Posterior cingulate gyrus (tissue), 11 donors: ENCODE measurements at regions of chr11 and their contacts with region 1.

Region 1: DNA sequence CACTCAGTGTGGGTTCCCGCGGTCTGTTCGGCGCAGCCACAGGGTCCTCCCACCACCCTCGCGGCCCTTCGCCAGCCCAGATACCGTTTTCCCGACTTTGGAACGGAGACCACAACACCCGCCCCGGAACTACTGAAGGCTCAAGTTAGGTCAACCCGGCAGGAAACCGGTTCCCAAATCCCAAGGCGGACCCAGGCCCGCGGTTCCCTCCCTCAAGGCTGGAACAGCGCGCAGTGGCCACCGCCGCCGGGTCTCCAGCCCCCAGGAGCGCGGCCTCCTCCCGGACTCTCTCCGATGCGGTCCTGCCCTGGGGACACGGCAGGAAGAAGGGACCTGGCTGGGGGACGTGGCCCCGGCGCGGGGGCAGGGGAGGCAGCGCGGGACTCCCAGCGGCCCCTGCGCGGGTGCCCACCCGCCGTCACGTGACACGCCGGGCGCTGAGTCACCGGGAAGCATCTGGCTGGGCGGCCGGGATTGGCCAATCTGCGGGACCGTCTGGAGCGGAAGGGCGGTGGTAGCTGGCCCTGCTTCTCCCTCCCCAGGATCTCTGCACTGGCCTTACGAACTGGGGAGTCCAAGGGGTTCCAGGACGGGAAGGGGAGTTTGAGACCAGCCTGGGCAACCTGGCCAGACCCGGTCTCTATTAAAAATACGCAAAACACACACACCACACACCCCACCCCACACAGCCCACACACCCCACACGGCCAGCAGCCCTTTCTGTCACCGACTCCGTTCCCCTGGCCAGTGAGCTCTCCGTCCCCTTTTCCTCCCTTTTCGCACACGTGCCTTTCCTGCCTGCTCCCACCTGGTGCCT is 21.5 kb upstream of the MALAT1 start:
- DNase-seq: peak; percentile 93 to 99 (median 96)

Region 2: GRCh38 chr11:65366340-65366773 is 111.0 kb before region 1 on chr11:
- intact Hi-C with region 1: no loop called
- DNase-seq: peak in 1 of 10 donors; percentile 27

Region 3: GRCh38 chr11:65454696-65455456 is 22.5 kb before region 1 on chr11:
- intact Hi-C with region 1: loop called (anchors 2 kb)
- DNase-seq: peak; percentile 73 to 97 (median 84)

Region 4: GRCh38 chr11:65497141-65498041 is 20.0 kb after region 1 on chr11:
- intact Hi-C with region 1: loop called (anchors 2 kb)
- DNase-seq: peak; percentile 94 to 99 (median 97)

Region 5: GRCh38 chr11:65524741-65525545 is 47.6 kb after region 1 on chr11 and contains the start of gene SCYL1:
- intact Hi-C with region 1: no loop called
- DNase-seq: peak; percentile 76 to 98 (median 84)